ENCODE measurements at regions of chr17 and their contacts with region 1.

Region 1: GRCh38 chr17:56819431-56820145 is 14.1 kb downstream of the C17orf67 start:
- DNase-seq: peak; percentile 37 to 83 (median 72)
- ATAC-seq: peak; percentile 94
- H3K4me3 ChIP-seq: no peak overlapping the region
- H3K4me3 Mint-ChIP-seq: no peak overlapping the region
- H3K27ac ChIP-seq: no peak overlapping the region
- H3K27ac Mint-ChIP-seq: no peak overlapping the region
- H3K4me1 ChIP-seq: no peaks in the 10 kb centered on the region
- H3K4me1 Mint-ChIP-seq: peaks cover 4% of the 10 kb centered on the region
- H3K27me3 ChIP-seq: no peaks in the 10 kb centered on the region
- H3K27me3 Mint-ChIP-seq: no peaks in the 10 kb centered on the region
- CTCF ChIP-seq: peak; percentile 82

Region 2: DNA sequence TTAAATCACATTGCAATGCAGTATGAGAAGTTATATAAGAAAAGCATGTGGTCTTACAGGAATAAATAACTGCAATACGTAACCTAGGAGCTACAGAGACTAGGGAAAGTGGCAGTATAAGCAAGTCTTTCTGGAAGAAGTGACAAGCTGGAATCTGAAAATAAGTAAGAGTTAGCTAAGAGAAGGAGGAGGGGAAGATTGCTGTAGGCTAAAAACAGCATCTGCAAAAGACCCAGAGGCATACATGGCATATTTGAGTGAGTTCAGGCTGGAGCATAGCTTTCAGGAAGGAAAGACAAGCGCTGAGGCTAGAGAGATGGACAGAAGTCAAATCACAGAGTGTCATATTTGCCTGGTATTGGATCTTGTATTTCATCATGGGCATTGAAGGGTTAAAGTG is 41.0 kb after region 1 on chr17:
- CTCF ChIA-PET with region 1: interaction called, 12 read pairs
- POLR2A ChIA-PET with region 1: interaction called, 3 read pairs
- intact Hi-C with region 1: no loop called
- DNase-seq: no peak
- ATAC-seq: no peak
- H3K4me3 ChIP-seq: no peak overlapping the region
- H3K4me3 Mint-ChIP-seq: no peak overlapping the region
- H3K27ac ChIP-seq: no peak overlapping the region
- H3K27ac Mint-ChIP-seq: no peak overlapping the region
- H3K4me1 ChIP-seq: no peaks in the 10 kb centered on the region
- H3K4me1 Mint-ChIP-seq: no peaks in the 10 kb centered on the region
- H3K27me3 ChIP-seq: no peaks in the 10 kb centered on the region
- H3K27me3 Mint-ChIP-seq: no peaks in the 10 kb centered on the region
- CTCF ChIP-seq: no peak

Region 3: GRCh38 chr17:56866496-56866895 is 46.9 kb after region 1 on chr17:
- CTCF ChIA-PET with region 1: interaction called, 12 read pairs
- POLR2A ChIA-PET with region 1: no interaction called
- intact Hi-C with region 1: loop called (anchors 1 to 2 kb)
- DNase-seq: peak in 2 of 9 experiments; percentile 17 to 38
- ATAC-seq: no peak
- H3K4me3 ChIP-seq: no peak overlapping the region
- H3K4me3 Mint-ChIP-seq: no peak overlapping the region
- H3K27ac ChIP-seq: no peak overlapping the region
- H3K27ac Mint-ChIP-seq: no peak overlapping the region
- H3K4me1 ChIP-seq: no peaks in the 10 kb centered on the region
- H3K4me1 Mint-ChIP-seq: peaks cover 8% of the 10 kb centered on the region
- H3K27me3 ChIP-seq: no peaks in the 10 kb centered on the region
- H3K27me3 Mint-ChIP-seq: no peaks in the 10 kb centered on the region
- CTCF ChIP-seq: no peak

Region 4: GRCh38 chr17:56891784-56892183 is 72.2 kb after region 1 on chr17:
- CTCF ChIA-PET with region 1: interaction called, 10 read pairs
- POLR2A ChIA-PET with region 1: no interaction called
- intact Hi-C with region 1: no loop called
- DNase-seq: peak; percentile 25 to 73 (median 65)
- ATAC-seq: peak; percentile 74
- H3K4me3 ChIP-seq: no peak overlapping the region
- H3K4me3 Mint-ChIP-seq: no peak overlapping the region
- H3K27ac ChIP-seq: no peak overlapping the region
- H3K27ac Mint-ChIP-seq: no peak overlapping the region
- H3K4me1 ChIP-seq: no peaks in the 10 kb centered on the region
- H3K4me1 Mint-ChIP-seq: peaks cover 2% of the 10 kb centered on the region
- H3K27me3 ChIP-seq: no peaks in the 10 kb centered on the region
- H3K27me3 Mint-ChIP-seq: no peaks in the 10 kb centered on the region
- CTCF ChIP-seq: peak; percentile 32

Region 5: DNA sequence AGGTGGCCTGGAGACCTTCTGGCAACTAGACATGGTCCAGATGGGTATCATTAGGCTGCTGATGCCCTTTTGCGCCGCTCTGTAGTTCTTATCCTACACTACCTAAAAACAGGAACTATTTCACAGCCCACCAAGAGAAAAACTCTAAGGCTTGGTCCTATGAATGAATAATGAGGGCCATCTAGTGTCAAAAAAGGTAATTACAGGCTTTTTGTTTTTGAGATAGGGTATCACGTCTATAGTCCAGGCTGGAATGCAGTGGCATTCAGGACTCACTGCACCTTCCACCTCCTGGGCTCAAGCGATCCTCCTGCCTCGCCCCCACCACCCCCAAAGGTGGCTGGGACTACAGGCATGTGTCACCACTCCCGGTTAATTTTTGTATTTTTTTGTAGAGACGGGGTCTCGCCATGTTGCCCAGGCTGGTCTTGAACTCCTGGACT is 120.3 kb after region 1 on chr17:
- CTCF ChIA-PET with region 1: interaction called, 22 read pairs
- POLR2A ChIA-PET with region 1: interaction called, 4 read pairs
- intact Hi-C with region 1: loop called (anchors 1 kb)
- DNase-seq: peak in 2 of 9 experiments; percentile 63 to 72
- ATAC-seq: peak; percentile 67
- H3K4me3 ChIP-seq: no peak overlapping the region
- H3K4me3 Mint-ChIP-seq: no peak overlapping the region
- H3K27ac ChIP-seq: no peak overlapping the region
- H3K27ac Mint-ChIP-seq: no peak overlapping the region
- H3K4me1 ChIP-seq: no peaks in the 10 kb centered on the region
- H3K4me1 Mint-ChIP-seq: no peaks in the 10 kb centered on the region
- H3K27me3 ChIP-seq: no peaks in the 10 kb centered on the region
- H3K27me3 Mint-ChIP-seq: no peaks in the 10 kb centered on the region
- CTCF ChIP-seq: peak; percentile 89

Region 6: DNA sequence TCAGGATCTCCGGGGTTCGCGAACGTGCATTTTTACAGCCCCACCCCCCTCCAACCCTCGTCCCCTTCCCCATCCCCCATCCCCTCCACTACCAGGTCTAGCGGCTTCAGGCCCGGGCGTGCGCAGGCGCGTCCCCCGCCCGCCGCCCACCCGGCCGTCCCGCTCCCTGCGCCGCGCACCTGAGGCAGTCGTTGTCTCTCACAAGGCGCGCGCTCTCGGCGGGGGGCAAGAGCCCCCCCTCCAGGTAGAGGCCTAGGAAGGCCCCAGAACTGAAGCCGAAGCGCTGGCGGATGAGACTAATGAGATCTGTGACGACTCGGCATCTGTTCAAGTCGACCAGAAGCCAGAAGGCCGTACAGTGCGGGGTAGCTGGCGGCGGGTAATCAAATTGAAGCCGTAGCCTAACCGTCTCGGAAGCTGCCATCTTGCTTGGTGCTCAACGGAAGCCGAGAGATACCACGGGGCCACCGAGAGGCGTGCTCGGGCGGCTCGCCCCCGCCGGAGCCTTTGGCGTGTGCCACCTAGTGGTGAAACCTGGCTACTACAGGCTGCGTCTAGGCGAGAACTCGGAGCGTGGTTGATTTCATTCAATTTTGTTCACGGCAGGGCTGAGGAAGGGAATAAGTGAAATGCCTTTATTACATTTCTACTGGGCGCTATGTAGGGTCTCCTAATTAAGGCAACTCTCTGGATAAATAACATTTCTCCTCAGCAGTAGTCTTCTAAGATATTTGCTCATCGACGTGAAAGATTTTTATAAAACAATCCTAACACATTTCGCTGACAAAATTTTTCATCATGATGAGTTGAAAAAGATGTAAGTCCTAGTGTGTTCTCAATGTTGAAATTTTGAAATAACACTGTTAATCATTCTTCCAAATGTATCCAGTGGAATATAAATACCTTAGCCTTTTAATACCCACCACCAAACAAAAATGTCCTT is 141.3 kb after region 1 on chr17 and contains the start of gene COIL:
- CTCF ChIA-PET with region 1: interaction called, 5 read pairs
- POLR2A ChIA-PET with region 1: no interaction called
- intact Hi-C with region 1: loop called in 1 of 2 experiments (anchors 1 kb)
- DNase-seq: peak; percentile 85 to 96 (median 93)
- ATAC-seq: peak; percentile 98
- H3K4me3 ChIP-seq: peak within 1 kb of the TSS; percentile 65 to 89
- H3K4me3 Mint-ChIP-seq: peak within 1 kb of the TSS; percentile 89
- H3K27ac ChIP-seq: peak within 1 kb of the TSS; percentile 78 to 79
- H3K27ac Mint-ChIP-seq: peak within 1 kb of the TSS; percentile 96
- H3K4me1 ChIP-seq: peaks cover 22% of the 10 kb centered on the region
- H3K4me1 Mint-ChIP-seq: peaks cover 25% of the 10 kb centered on the region
- H3K27me3 ChIP-seq: no peaks in the 10 kb centered on the region
- H3K27me3 Mint-ChIP-seq: no peaks in the 10 kb centered on the region
- CTCF ChIP-seq: peak; percentile 99
- total RNA-seq, gene COIL: 24.1 to 24.3 TPM